ENCODE measurements at regions of chr2 and their contacts with region 1.

Region 1: DNA sequence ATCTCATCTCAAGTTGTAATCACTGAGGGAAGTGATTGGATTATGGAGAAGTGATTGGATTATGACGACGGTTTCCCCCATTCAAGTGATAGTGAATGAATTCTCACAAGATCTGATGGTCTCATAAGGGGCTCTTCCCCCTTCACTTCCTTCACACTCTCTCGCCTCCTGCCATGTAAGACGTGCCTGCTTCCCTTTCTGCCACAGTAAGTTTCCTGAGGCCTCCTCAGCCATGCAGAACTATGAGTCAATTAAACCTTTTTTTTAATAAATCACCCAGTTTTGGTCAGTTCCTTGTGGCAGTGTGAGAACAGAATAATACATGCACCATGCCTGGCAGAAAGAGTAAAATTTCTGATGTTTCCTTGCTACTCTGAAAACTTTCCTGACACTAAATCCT is 36.6 kb downstream of the CEP68 start:
- DNase-seq: no peak
- ATAC-seq: no peak

Region 2: GRCh38 chr2:65129826-65130663 is 37.3 kb after region 1 on chr2 and contains the start of gene RAB1A:
- intact Hi-C with region 1: loop called in 1 of 2 experiments (anchors 5 kb)
- DNase-seq: peak; percentile 100
- ATAC-seq: peak; percentile 97
- total RNA-seq, gene RAB1A: 118 to 163 TPM